Mammary epithelial cell (primary cell): ENCODE measurements at regions of chr20 and their contacts with region 1.

Region 1: GRCh38 chr20:35757098-35757705 is 14.6 kb upstream of the PHF20 start:
- DNase-seq: no peak
- H3K4me3 ChIP-seq: no peak overlapping the region
- H3K27ac ChIP-seq: no peak overlapping the region
- H3K4me1 ChIP-seq: peaks cover 3% of the 10 kb centered on the region
- H3K27me3 ChIP-seq: no peaks in the 10 kb centered on the region
- CTCF ChIP-seq: no peak

Region 2: DNA sequence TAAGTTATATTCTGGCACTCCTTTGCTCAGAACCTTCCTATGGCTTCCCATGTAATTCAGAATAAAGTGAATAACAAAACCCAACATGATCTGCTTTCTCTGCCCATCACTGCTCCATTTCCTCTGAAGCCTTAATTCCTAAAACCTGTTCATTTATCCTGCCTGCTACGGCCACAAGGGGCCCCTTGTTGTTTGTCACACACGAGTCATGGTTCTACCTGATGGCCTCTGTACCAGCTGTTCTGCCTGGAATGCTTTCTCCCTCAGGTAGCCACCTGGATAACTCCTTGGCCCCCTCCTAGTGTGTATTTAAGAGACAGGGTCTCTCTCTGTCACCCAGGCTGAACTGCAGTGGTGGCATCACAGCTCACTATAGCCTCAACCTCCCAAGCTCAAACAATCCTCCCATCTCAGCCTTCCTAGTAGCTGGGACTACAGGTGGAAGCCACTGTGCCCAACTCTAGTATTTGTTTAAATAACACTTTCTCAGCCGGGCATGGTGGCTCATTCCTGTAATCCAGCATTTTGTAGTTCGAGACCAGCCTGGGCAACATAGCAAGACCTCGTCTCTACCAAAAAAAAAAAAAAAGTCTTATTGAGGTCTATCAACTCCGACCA is 188.4 kb before region 1 on chr20:
- CTCF ChIA-PET with region 1: no interaction called
- dilution Hi-C with region 1: no loop called
- in situ Hi-C with region 1: no loop called
- intact Hi-C with region 1: no loop called
- DNase-seq: peak; percentile 26
- H3K4me3 ChIP-seq: no peak overlapping the region
- H3K27ac ChIP-seq: no peak overlapping the region
- H3K4me1 ChIP-seq: no peaks in the 10 kb centered on the region
- H3K27me3 ChIP-seq: no peaks in the 10 kb centered on the region
- CTCF ChIP-seq: peak; percentile 39 to 48

Region 3: DNA sequence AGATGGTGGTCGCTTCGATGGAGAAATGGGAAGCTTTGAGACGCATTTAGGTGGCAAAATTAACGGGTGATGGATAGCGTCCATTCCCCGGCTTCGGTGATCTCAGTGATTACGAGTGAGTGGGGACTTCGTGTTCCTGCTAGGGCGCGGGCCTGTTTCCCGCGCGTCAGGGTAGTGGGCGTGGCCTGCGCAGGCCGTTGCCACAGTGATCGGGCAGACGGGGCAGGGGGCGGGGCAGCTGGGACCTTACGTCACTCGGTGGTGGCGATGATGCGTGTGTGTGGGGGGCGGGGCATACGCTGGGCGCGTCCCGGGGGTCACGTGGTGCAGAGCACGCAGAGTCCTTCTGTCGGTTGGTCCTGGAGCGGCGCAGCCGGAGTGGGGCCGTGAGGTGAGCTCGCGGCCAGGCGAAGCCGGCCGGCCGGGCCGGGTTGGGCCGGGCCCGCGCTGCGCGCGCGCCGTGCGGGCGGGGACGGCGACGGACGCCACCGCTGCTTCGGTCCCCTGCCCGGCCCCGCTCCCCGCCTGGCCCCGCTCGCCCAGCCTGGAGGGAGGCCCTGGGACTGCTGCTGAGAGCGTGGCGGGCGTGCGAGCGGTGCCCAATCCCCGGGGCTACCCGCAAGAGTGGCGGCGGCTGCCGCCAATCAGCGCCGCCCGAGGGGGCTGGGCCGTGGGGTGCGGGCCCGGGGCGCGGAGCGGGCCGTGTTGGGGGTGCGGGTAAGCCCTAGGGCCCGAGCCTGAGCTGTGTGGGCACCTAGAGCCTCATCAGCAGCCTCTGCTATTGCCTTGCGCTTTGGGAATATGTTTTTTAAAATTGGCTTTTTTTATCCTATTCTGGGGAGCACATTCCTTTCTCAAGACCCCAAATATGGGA is 14.7 kb after region 1 on chr20 and contains the start of gene PHF20:
- CTCF ChIA-PET with region 1: no interaction called
- dilution Hi-C with region 1: no loop called
- in situ Hi-C with region 1: no loop called
- intact Hi-C with region 1: loop called (anchors 2 kb)
- DNase-seq: peak; percentile 90
- H3K4me3 ChIP-seq: peak within 1 kb of the TSS; percentile 74 to 81 (median 79)
- H3K27ac ChIP-seq: peak within 1 kb of the TSS; percentile 86
- H3K4me1 ChIP-seq: peaks cover 29% of the 10 kb centered on the region
- H3K27me3 ChIP-seq: no peaks in the 10 kb centered on the region
- CTCF ChIP-seq: no peak
- total RNA-seq, gene PHF20: 24.0 to 39.7 TPM